WTC11 (cell line): ENCODE measurements at regions of chr16 and their contacts with region 1.

Region 1: DNA sequence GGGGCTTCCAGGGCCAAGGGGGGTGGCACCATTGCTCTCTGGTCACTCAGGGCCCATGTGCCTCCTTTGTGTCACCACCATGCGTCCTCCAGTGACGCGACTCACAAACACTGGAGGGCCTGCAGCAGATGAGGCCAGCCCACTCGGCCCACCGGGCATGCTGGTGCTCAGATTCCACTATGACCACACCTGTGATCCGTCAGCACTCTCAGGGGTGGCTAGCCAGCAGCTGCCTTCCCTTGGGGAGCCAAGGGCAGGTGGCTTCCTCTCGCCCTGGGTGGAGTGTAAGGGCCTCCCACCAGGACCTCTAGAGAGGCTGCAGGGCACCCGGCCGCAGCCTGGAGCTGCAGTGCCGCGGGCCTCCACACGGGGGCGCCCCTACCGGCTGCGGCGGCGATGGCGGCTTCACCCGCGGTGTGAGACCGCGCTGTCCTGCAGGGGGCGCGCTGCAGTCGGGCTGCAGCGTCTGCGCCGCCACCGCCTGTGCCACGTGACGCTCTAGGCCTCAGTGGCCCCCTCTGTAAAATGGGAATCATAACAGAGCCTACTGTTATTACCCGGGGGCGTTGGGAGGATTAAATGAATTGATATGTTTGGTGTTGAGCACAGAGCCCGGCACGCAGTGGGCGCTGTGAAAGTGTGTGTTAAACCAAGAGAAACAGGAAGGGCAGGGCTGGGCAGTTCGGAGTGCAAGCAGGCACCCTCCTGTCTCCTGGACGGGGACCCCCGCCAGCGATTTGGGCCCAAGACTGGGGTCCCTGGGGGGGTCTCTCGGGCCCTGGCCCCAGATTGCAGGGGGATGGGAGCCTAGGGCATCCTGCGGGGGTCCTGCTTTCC is 192.4 kb upstream of the GSE1 start:
- DNase-seq: peak; percentile 73
- ATAC-seq: peak; percentile 27
- H3K4me3 Mint-ChIP-seq: no peak overlapping the region
- H3K27ac Mint-ChIP-seq: no peak overlapping the region
- H3K4me1 Mint-ChIP-seq: peaks cover 26% of the 10 kb centered on the region
- H3K27me3 Mint-ChIP-seq: no peaks in the 10 kb centered on the region
- CTCF ChIP-seq: peak; percentile 100

Region 2: DNA sequence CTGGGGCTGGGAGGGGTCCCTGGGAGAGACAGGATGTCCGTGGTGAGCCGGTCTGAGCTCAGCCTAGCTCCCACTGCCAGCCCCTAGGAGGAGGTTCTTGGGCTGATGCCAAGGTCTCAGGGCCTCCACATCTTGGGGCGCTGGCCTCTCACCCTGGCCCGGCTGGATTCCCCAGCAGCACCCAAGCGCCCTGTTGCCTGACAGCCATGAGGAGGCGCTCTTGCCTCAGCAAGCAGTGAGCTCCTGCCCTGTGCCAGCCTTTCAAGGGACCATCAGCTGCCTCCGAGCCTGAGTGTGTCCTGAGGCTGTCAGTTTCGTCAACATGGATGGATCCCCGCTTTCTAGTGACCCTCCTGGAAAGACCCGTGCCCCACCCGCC is 73.5 kb before region 1 on chr16:
- CTCF ChIA-PET with region 1: interaction called, 51 read pairs
- POLR2A ChIA-PET with region 1: no interaction called
- DNase-seq: peak; percentile 77
- ATAC-seq: peak; percentile 85
- H3K4me3 Mint-ChIP-seq: no peak overlapping the region
- H3K27ac Mint-ChIP-seq: no peak overlapping the region
- H3K4me1 Mint-ChIP-seq: peaks cover 10% of the 10 kb centered on the region
- H3K27me3 Mint-ChIP-seq: no peaks in the 10 kb centered on the region; the same call in 1 of the 2 replicates
- CTCF ChIP-seq: peak; percentile 63; the same call in 1 of the 2 replicates

Region 3: GRCh38 chr16:85381738-85382592 is 38.8 kb before region 1 on chr16:
- CTCF ChIA-PET with region 1: interaction called, 14 read pairs
- POLR2A ChIA-PET with region 1: no interaction called
- DNase-seq: no peak
- ATAC-seq: no peak
- H3K4me3 Mint-ChIP-seq: no peak overlapping the region
- H3K27ac Mint-ChIP-seq: peak overlapping the region; percentile 90
- H3K4me1 Mint-ChIP-seq: peaks cover 12% of the 10 kb centered on the region
- H3K27me3 Mint-ChIP-seq: no peaks in the 10 kb centered on the region
- CTCF ChIP-seq: no peak

Region 4: GRCh38 chr16:85448557-85449197 is 28.0 kb after region 1 on chr16:
- CTCF ChIA-PET with region 1: interaction called, 22 read pairs
- POLR2A ChIA-PET with region 1: no interaction called
- DNase-seq: no peak
- ATAC-seq: peak; percentile 26
- H3K4me3 Mint-ChIP-seq: no peak overlapping the region
- H3K27ac Mint-ChIP-seq: no peak overlapping the region
- H3K4me1 Mint-ChIP-seq: peaks cover 13% of the 10 kb centered on the region
- H3K27me3 Mint-ChIP-seq: no peaks in the 10 kb centered on the region
- CTCF ChIP-seq: no peak

Region 5: GRCh38 chr16:85491058-85491771 is 70.5 kb after region 1 on chr16:
- CTCF ChIA-PET with region 1: interaction called, 26 read pairs
- POLR2A ChIA-PET with region 1: no interaction called
- DNase-seq: peak; percentile 78
- ATAC-seq: peak; percentile 66
- H3K4me3 Mint-ChIP-seq: no peak overlapping the region
- H3K27ac Mint-ChIP-seq: peak overlapping the region; percentile 90
- H3K4me1 Mint-ChIP-seq: peaks cover 17% of the 10 kb centered on the region
- H3K27me3 Mint-ChIP-seq: no peaks in the 10 kb centered on the region
- CTCF ChIP-seq: peak; percentile 86

Region 6: GRCh38 chr16:85610508-85611332 is 190.0 kb after region 1 on chr16:
- CTCF ChIA-PET with region 1: interaction called, 66 read pairs
- POLR2A ChIA-PET with region 1: no interaction called
- DNase-seq: peak; percentile 94
- ATAC-seq: peak; percentile 40
- H3K4me3 Mint-ChIP-seq: peak overlapping the region; percentile 68
- H3K27ac Mint-ChIP-seq: peak overlapping the region; percentile 97
- H3K4me1 Mint-ChIP-seq: peaks cover 49% of the 10 kb centered on the region
- H3K27me3 Mint-ChIP-seq: peaks cover 17% of the 10 kb centered on the region
- CTCF ChIP-seq: peak; percentile 96